Sciatic nerve (tissue), 2 donors: ENCODE measurements at regions of chr16 and their contacts with region 1.

Region 1: GRCh38 chr16:47096297-47096696 is 47.4 kb downstream of the NETO2 start:
- DNase-seq: no peak
- ATAC-seq: no peak

Region 2: DNA sequence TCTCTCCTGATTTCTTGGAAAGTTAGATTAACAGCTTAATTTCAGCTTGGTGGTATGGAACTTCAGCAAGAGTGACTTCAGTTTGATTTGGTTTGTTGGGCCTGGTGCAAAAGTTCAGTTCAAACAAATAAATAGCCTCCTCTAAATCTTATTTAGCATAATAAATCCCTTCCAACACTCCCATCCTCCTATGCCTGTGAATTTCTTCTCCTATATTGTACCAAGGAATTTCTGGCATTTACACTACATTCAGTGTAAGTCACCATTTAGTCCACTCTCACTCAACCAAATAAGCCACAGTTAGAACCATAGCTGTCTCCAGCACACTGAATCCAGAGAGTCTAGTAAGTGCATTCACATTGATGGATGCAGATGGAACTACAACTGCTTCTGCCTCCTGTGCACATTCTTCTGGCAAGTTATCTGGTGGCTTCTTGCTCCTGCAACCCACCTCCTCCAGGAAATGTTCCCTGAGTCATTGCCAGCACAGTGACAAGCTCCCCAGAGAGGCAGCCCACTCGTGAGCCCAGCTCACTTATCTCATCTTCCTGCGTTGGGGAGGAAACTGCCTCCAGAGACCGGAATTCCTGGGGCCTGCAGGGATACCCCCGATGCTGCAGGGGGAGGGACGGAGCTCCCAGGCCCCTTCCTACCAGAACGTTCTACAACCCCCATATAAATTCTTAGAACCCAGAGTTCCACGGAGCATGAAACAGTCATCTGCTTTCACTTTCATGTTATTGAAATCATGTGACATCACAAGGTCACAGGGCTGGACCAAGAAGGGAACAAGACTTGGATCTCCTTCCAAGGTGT is 683.1 kb after region 1 on chr16:
- intact Hi-C with region 1: loop called (anchors 5 kb)
- DNase-seq: no peak
- ATAC-seq: peak; percentile 17